HCT116 (cell line): ENCODE measurements at regions of chr13 and their contacts with region 1.

Region 1: GRCh38 chr13:62357887-62358645 is 942.4 kb upstream of the PCDH20 start:
- DNase-seq: peak; percentile 74
- ATAC-seq: peak; percentile 100
- H3K4me3 ChIP-seq: no peak overlapping the region
- H3K27ac ChIP-seq: no peak overlapping the region
- H3K4me1 ChIP-seq: no peaks in the 10 kb centered on the region
- H3K27me3 ChIP-seq: no peaks in the 10 kb centered on the region
- CTCF ChIP-seq: peak; percentile 41 to 78 (median 74); a peak in 5 of 6 replicates
- POLR2A ChIP-seq: no peak
- RAD21 ChIP-seq: peak; percentile 78

Region 2: GRCh38 chr13:61880578-61881283 is 477.3 kb before region 1 on chr13:
- CTCF ChIA-PET with region 1: no interaction called
- POLR2A ChIA-PET with region 1: no interaction called
- RAD21 ChIA-PET with region 1: no interaction called
- intact Hi-C with region 1: loop called (anchors 10 kb)
- DNase-seq: peak; percentile 26
- ATAC-seq: peak; percentile 85
- H3K4me3 ChIP-seq: no peak overlapping the region
- H3K27ac ChIP-seq: no peak overlapping the region
- H3K4me1 ChIP-seq: no peaks in the 10 kb centered on the region
- H3K27me3 ChIP-seq: no peaks in the 10 kb centered on the region
- CTCF ChIP-seq: peak in 2 of 3 experiments; percentile 62 to 65; a peak in 4 of 6 replicates
- POLR2A ChIP-seq: no peak
- RAD21 ChIP-seq: no peak; the same call in 1 of the 2 replicates

Region 3: GRCh38 chr13:62014299-62014698 is 343.8 kb before region 1 on chr13:
- CTCF ChIA-PET with region 1: interaction called, 16 read pairs
- POLR2A ChIA-PET with region 1: no interaction called
- RAD21 ChIA-PET with region 1: no interaction called
- intact Hi-C with region 1: loop called (anchors 1 kb)
- DNase-seq: peak; percentile 24
- ATAC-seq: peak; percentile 59; the same call in 1 of the 2 replicates
- H3K4me3 ChIP-seq: no peak overlapping the region
- H3K27ac ChIP-seq: no peak overlapping the region
- H3K4me1 ChIP-seq: no peaks in the 10 kb centered on the region
- H3K27me3 ChIP-seq: no peaks in the 10 kb centered on the region
- CTCF ChIP-seq: peak in 2 of 3 experiments; percentile 5 to 47; a peak in 3 of 6 replicates
- POLR2A ChIP-seq: no peak
- RAD21 ChIP-seq: peak; percentile 54

Region 4: DNA sequence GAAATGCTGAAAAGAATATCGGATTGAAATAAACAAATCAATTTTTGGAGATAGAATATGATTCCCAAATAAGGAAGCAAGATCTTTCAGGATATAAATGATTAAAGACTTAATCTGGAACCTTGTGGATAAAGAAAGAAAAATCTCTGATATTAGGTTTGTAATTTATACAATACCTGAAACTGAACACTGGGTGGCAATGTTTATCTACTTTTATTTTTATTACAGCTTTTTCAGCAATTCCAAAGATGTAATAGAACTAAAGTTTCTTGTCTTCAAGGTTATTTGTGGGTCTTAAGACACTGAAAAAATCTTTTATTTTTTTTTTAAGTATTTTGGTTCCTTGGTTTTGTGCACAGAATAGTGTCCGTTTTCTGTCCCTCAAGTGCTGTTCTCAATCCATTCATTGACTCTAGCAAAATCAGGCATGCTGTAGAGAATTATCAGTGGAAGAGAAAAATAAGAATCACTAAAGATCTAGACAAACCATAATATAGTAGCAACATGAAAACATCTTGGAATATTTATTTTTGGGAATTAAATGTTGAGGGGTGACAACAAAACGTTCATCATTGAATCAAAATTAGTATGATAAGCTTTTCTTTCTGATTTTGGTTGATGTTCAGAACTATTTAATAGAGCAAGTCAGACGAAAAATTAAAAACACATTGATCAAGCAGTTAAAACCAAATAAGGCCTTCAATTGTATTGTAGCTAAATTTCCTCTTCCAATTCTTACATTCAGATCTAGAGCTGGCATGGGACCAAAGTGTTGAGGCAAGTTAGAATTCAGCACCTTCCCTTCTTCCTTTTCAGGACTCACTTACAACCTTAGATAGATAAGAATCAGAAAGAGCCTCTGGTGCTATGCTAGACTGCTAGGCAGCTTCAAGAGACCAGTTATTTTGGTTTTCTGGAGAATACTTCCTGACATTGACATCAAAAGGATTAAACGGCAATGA is 238.0 kb before region 1 on chr13:
- CTCF ChIA-PET with region 1: interaction called, 17 read pairs
- POLR2A ChIA-PET with region 1: no interaction called
- RAD21 ChIA-PET with region 1: no interaction called
- intact Hi-C with region 1: loop called (anchors 1 kb)
- DNase-seq: peak; percentile 10
- ATAC-seq: no peak
- H3K4me3 ChIP-seq: no peak overlapping the region
- H3K27ac ChIP-seq: no peak overlapping the region
- H3K4me1 ChIP-seq: no peaks in the 10 kb centered on the region
- H3K27me3 ChIP-seq: no peaks in the 10 kb centered on the region
- CTCF ChIP-seq: peak; percentile 5 to 55 (median 27); a peak in 3 of 6 replicates
- POLR2A ChIP-seq: no peak
- RAD21 ChIP-seq: peak; percentile 53

Region 5: DNA sequence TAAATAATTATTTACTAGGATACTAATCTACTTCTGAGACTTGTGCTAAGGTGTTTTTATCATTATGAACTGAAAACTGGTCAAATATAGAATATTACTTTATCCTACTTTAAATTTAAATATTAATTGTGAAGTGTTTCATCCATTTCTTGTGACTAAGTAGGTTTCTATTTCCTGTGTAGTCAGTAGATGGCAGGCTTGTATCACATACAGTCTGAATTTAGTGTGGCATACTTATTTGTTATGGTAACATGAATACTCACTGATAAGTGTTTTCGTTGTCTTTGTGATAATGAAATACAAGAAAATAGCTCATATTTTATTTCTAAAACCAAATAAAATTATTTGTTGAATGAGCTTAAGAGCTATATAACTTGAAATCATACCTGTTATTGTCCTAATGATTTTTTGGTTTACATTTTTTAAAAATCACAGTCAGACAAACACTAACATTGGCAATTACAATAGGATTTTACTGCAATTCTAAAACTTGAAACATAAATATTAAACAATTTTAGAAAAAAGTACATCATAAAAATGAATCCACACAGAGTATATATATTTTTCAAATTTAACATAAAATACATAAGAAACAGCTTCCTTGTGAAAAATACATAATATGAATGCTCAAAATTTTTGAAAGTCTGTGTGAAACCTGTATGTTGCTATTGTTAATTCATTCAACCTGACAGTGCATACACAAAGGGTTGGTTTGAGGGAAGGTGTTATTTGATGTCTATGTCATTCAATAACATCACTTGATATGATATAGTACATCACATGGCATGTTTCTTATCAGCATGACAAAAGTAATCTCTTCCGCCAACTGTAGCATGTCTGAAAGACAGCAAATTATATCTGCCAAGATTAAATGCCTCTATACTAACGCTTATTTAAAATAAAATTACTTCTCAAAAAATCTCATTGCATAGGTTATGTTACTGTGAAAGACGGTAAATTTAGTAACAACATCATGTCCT is 37.6 kb before region 1 on chr13:
- CTCF ChIA-PET with region 1: no interaction called
- POLR2A ChIA-PET with region 1: no interaction called
- RAD21 ChIA-PET with region 1: no interaction called
- intact Hi-C with region 1: loop called (anchors 1 kb)
- DNase-seq: peak; percentile 46
- ATAC-seq: peak; percentile 72
- H3K4me3 ChIP-seq: no peak overlapping the region
- H3K27ac ChIP-seq: no peak overlapping the region
- H3K4me1 ChIP-seq: no peaks in the 10 kb centered on the region
- H3K27me3 ChIP-seq: no peaks in the 10 kb centered on the region
- CTCF ChIP-seq: peak in 2 of 3 experiments; percentile 58 to 67; a peak in 4 of 6 replicates
- POLR2A ChIP-seq: no peak
- RAD21 ChIP-seq: peak; percentile 72